ENCODE measurements at regions of chr1 and their contacts with region 1.

Region 1: GRCh38 chr1:68346188-68346808 is 103.5 kb downstream of the RPE65 start:
- DNase-seq: no peak
- H3K4me3 ChIP-seq: no peak overlapping the region
- H3K27ac ChIP-seq: no peak overlapping the region
- H3K4me1 ChIP-seq: peaks cover 0 to 8% (median 6%) of the 10 kb centered on the region in 4 donors
- H3K27me3 ChIP-seq: no peaks in the 10 kb centered on the region
- CTCF ChIP-seq: peak in 3 of 4 experiments; percentile 20 to 45 (median 28)
- EP300 ChIP-seq: no peak
- POLR2A ChIP-seq: no peak

Region 2: DNA sequence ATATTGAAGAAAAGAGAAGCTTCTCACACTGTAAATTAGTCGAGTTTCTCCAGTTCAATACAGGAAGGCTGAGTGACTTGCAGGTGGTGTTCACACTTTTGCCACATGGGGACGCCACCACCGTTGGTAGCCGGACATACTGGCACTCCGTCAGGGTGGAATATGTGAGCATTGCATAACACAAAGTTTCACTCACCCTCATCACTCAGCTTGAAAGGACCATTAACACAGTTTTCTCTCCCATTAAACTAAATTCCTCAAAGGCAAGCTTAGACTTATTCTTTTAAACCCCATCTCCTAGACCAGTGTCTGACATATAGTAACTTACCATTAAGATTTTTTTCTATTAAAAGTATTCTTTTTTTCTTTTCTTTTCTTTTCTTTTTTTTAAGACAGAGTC is 810.8 kb before region 1 on chr1:
- intact Hi-C with region 1: loop called (anchors 10 kb)
- DNase-seq: peak; percentile 88
- H3K4me3 ChIP-seq: no peak overlapping the region
- H3K27ac ChIP-seq: no peak overlapping the region
- H3K4me1 ChIP-seq: peaks cover 0 to 5% (median 0%) of the 10 kb centered on the region in 4 donors
- H3K27me3 ChIP-seq: peaks cover 0 to 3% (median 0%) of the 10 kb centered on the region in 3 donors
- CTCF ChIP-seq: peak; percentile 48 to 75 (median 62)
- EP300 ChIP-seq: no peak
- POLR2A ChIP-seq: no peak

Region 3: DNA sequence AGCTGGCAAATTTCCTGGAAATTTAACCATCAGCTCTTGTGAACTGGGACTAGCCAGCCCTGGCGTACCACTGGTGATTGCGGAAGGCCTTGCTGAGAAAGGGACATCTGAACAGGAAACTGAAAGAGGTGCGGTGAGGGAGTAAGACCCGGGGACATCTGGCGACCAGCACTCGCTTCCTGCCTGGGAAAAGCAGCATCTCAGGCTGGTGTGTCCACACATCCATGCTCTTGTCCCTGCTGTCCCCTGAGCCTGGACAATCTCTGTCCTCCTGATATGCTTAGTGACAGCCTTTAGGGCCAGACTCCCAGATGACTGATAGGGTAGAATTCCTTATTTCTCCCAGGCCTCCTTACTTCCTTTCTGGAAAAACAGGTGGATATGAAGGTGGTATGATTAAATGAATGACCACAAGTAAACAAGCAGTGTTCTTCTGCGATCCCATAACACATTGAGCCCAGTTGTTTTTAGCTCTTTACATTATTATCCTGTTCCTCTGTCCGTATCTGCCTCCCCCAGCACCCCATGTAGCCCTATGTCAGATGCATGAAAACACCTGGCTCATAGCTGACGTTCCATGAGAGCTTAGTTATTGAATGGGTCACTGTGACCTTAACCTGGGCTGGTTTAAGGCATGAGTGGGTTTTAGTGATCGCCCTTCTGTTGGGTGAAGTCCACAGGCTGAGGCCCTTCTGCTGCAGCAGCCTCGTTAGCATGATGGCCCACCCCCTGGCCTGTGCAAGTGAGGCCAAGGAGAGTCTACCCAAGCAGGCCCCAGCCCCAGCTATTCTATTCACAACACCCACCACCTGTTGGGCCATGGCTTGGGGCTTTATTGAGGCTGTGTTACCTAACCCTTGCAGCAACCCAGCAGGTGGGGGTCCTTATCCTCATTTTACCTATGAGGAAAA is 737.4 kb before region 1 on chr1:
- intact Hi-C with region 1: no loop called
- DNase-seq: no peak
- H3K4me3 ChIP-seq: no peak overlapping the region
- H3K27ac ChIP-seq: no peak overlapping the region
- H3K4me1 ChIP-seq: peaks cover 0 to 12% (median 0%) of the 10 kb centered on the region in 4 donors
- H3K27me3 ChIP-seq: no peaks in the 10 kb centered on the region
- CTCF ChIP-seq: no peak
- EP300 ChIP-seq: no peak
- POLR2A ChIP-seq: no peak

Region 4: DNA sequence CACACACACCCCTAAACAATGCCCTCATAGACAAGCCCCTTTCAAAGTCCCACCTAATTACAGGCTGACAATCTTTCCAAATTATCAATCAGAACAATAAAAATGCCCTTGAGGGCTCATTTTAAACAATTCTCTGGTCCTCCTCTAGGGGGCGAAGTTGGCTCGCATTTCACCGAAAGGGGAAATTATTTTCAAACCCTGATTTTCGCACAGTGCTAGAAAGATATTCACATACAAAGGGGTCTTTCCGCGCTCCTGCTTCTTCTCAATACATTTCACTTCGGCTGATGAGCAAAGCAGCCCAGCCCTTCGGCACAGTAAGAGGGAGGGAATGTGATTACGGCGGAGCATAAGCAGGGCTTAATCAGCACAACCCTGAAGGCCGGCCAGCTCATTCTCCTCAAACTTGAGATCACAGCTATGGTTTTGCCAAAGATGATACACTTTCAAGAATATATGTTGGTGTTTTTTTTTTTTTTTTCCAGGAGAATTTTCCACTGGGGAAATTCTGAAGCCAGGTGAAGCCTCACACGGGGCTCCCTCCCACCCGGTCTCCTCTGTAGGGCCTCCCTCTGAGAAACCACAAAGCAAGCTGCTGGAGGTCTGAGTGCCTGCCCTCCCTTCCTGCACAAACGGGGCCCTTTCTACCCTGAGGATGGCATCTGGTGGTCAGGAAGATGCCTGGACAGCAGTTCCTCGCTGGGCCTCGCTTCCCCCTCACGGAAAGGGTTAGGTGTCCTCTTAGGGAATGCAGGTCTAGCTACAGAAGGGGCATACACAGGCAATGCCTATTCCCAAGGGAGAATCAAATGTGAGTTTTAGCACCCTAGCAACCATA is 579.9 kb before region 1 on chr1:
- intact Hi-C with region 1: loop called (anchors 5 kb)
- DNase-seq: no peak
- H3K4me3 ChIP-seq: peak overlapping the region in 3 of 4 donors; percentile 12 to 24 (median 23)
- H3K27ac ChIP-seq: peak overlapping the region in 3 of 4 donors; percentile 25 to 56 (median 50)
- H3K4me1 ChIP-seq: peaks cover 0 to 26% (median 6%) of the 10 kb centered on the region in 4 donors
- H3K27me3 ChIP-seq: no peaks in the 10 kb centered on the region
- CTCF ChIP-seq: peak; percentile 80 to 87 (median 84)
- EP300 ChIP-seq: no peak
- POLR2A ChIP-seq: no peak

Region 5: DNA sequence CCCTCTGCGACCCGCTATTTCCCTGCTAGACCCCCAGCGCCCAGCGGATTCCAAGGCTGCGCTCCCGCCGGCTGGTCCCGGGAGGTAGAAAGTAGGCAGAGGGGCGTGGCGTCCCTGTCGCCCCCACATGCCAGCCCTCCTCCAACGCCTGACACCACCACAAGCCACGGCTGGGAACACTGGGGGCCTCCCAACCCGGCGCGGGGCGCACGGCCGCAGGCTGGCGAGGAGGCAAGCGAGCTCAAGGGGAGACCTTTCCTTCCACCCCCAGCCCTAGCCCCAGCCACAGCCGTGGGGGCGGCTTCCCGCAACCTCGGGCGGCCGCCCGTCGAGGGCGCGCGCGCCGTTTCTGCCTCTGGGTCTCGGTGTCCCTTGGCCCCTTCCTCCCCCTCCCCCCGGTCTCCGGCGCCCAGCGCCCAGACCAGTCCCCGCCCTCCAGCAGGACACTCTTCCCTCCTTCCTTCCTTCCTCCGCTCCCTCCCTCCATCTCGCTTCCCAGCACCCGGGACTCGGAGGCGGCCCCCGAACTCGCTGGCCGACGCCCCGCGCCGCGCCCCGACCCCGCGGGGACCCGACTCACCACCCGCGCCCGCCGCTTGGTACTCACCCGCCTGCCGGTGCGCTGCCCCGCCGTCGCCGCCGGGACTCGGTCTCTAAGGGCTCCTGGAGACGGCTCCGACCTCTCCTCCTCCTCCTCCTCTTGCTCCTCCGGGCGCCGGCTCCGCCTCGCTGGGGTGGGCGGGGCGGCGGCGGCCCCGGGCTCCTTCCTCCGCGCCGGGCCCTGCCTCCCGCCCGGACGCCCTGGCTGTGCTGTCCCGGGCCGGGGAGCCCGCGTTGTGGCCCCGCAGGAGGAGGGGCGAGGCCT is 513.3 kb before region 1 on chr1 and contains the start of gene GNG12:
- intact Hi-C with region 1: loop called (anchors 5 kb)
- DNase-seq: peak; percentile 89
- H3K4me3 ChIP-seq: peak within 1 kb of the TSS; percentile 67 to 78 (median 72)
- H3K27ac ChIP-seq: peak within 1 kb of the TSS; percentile 81 to 92 (median 84)
- H3K4me1 ChIP-seq: peaks cover 0 to 32% (median 18%) of the 10 kb centered on the region in 4 donors
- H3K27me3 ChIP-seq: no peaks in the 10 kb centered on the region
- CTCF ChIP-seq: no peak
- EP300 ChIP-seq: no peak
- POLR2A ChIP-seq: no peak
- total RNA-seq, gene GNG12: 41.9 to 58.2 (median 46.7) TPM

Region 6: DNA sequence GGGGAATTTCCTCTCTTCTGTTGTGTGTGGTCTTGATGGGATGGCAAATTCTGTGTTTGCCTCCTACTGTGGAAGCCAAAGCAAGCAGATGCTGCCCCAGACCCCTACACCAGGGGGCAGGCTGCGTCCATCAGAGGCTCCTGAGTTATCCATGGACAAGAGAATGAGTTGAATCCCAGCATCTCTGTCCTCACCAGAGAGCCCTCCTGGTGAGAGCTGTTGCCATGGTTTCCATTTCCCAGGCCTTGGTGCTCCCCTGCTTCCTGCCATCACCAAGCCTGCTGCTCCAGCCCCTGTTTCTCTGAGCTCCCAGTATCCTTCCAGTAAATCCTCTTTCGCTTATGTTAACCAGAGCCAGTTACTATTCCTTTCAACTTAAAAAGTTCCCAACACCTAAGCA is 492.6 kb before region 1 on chr1:
- intact Hi-C with region 1: loop called (anchors 5 kb)
- DNase-seq: no peak
- H3K4me3 ChIP-seq: no peak overlapping the region
- H3K27ac ChIP-seq: no peak overlapping the region
- H3K4me1 ChIP-seq: peaks cover 0 to 13% (median 11%) of the 10 kb centered on the region in 4 donors
- H3K27me3 ChIP-seq: no peaks in the 10 kb centered on the region
- CTCF ChIP-seq: peak in 3 of 4 experiments; percentile 41 to 69 (median 52)
- EP300 ChIP-seq: no peak
- POLR2A ChIP-seq: no peak

Region 7: GRCh38 chr1:68120136-68120791 is 226.0 kb before region 1 on chr1:
- intact Hi-C with region 1: loop called (anchors 1 kb)
- DNase-seq: no peak
- H3K4me3 ChIP-seq: no peak overlapping the region
- H3K27ac ChIP-seq: peak overlapping the region; percentile 67 to 75 (median 73)
- H3K4me1 ChIP-seq: peaks cover 0 to 26% (median 15%) of the 10 kb centered on the region in 4 donors
- H3K27me3 ChIP-seq: no peaks in the 10 kb centered on the region
- CTCF ChIP-seq: peak; percentile 48 to 87 (median 84)
- EP300 ChIP-seq: no peak
- POLR2A ChIP-seq: no peak

Region 8: DNA sequence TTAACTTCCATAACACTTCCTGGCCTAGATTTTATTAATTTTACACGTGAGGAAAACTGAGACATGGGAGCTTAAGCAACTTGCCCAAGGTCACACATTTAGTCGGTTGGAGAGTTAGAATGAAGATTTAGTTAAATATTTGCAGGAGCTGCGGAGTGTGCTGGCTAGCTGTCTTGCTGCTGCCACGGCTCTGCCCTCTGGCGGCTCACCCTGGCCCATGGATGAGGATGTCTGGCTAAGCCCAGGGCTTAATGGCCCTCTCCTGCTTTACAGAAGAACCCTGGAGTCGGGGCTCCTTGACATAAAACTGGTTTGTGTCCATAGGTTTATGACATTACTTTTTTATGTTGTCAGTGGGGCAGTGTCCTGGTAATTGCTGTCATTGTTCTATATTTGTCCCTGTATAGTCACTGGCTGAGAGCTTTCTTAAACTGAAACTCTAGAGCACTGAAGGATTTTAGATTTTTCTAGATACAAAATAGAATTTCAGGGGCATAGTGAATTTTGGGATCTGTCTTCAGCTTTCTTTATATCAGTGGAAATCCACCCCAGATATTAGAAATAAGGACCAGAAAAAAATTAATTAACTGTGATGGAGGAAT is 25.1 kb before region 1 on chr1:
- intact Hi-C with region 1: loop called (anchors 2 kb)
- DNase-seq: peak; percentile 87
- H3K4me3 ChIP-seq: no peak overlapping the region
- H3K27ac ChIP-seq: peak overlapping the region; percentile 70 to 82 (median 78)
- H3K4me1 ChIP-seq: peaks cover 0 to 47% (median 23%) of the 10 kb centered on the region in 4 donors
- H3K27me3 ChIP-seq: no peaks in the 10 kb centered on the region
- CTCF ChIP-seq: peak; percentile 22 to 81 (median 76)
- EP300 ChIP-seq: no peak
- POLR2A ChIP-seq: no peak

Region 9: GRCh38 chr1:68401511-68401910 is 55.2 kb after region 1 on chr1:
- intact Hi-C with region 1: no loop called
- DNase-seq: no peak
- H3K4me3 ChIP-seq: no peak overlapping the region
- H3K27ac ChIP-seq: no peak overlapping the region
- H3K4me1 ChIP-seq: no peaks in the 10 kb centered on the region
- H3K27me3 ChIP-seq: no peaks in the 10 kb centered on the region
- CTCF ChIP-seq: no peak
- EP300 ChIP-seq: no peak
- POLR2A ChIP-seq: no peak

Region 10: DNA sequence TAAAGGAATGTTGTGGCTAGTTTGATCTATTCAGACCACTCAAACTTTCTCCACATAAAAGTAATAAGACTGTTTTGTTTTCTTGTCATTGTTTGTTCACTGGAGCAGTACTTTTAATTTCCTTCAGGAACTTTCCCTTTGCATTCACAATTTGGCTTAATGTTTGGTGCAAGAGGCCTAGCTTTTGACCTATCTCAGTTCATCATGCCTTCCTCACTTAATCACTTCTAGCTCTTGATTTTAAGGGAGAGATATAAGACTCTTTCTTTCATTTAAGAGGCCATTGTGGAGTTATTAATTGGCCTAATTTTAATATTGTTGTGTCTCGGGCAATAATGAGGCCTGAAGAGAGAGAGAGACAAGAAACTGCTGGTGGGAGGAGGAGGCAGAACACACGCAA is 522.3 kb after region 1 on chr1:
- intact Hi-C with region 1: no loop called
- DNase-seq: no peak
- H3K4me3 ChIP-seq: no peak overlapping the region
- H3K27ac ChIP-seq: no peak overlapping the region
- H3K4me1 ChIP-seq: no peaks in the 10 kb centered on the region
- H3K27me3 ChIP-seq: no peaks in the 10 kb centered on the region
- CTCF ChIP-seq: no peak
- EP300 ChIP-seq: no peak
- POLR2A ChIP-seq: no peak